GM12878 (cell line): ENCODE measurements at regions of chr11 and their contacts with region 1.

Region 1: DNA sequence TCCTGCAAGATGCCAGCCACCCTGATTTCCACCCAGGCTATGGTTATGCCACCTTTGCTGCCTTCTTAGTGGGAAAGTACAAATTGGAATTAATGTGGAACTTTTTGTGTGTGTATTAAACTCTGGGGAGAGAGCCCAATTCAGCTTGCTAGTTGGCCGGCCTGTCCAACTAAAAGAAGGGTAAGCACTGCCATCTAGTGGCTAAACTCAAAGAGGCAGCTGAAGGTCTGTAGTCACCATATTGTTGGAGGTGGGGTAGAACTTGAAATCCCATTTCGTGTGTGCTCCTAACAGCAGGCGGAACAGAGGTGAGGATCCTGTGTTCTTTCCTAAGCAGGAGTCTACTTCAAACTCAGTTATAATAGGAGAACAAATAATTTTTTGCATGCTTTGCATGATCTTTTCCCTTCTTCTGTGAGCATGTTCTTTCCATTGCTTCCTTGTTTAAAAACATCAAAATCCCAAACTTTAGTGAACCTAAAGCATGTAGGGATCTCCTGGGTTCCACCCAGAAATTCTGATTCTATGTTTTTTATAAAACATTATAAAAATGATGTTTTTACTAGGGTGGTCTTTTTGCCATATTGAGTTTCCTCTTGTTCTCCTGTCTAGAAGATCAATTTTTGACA is 138.8 kb upstream of the SORL1-AS1 start:
- DNase-seq: peak; percentile 82
- ATAC-seq: peak; percentile 71
- H3K4me3 ChIP-seq: peak overlapping the region; percentile 37; the same call in 1 of the 2 replicates
- H3K27ac ChIP-seq: peak overlapping the region; percentile 75
- H3K4me1 ChIP-seq: peaks cover 47% of the 10 kb centered on the region
- H3K27me3 ChIP-seq: no peaks in the 10 kb centered on the region
- CTCF ChIP-seq: peak; percentile 79 to 92 (median 88)
- EP300 ChIP-seq: no peak
- POLR2A ChIP-seq: no peak
- RAD21 ChIP-seq: peak; percentile 97

Region 2: DNA sequence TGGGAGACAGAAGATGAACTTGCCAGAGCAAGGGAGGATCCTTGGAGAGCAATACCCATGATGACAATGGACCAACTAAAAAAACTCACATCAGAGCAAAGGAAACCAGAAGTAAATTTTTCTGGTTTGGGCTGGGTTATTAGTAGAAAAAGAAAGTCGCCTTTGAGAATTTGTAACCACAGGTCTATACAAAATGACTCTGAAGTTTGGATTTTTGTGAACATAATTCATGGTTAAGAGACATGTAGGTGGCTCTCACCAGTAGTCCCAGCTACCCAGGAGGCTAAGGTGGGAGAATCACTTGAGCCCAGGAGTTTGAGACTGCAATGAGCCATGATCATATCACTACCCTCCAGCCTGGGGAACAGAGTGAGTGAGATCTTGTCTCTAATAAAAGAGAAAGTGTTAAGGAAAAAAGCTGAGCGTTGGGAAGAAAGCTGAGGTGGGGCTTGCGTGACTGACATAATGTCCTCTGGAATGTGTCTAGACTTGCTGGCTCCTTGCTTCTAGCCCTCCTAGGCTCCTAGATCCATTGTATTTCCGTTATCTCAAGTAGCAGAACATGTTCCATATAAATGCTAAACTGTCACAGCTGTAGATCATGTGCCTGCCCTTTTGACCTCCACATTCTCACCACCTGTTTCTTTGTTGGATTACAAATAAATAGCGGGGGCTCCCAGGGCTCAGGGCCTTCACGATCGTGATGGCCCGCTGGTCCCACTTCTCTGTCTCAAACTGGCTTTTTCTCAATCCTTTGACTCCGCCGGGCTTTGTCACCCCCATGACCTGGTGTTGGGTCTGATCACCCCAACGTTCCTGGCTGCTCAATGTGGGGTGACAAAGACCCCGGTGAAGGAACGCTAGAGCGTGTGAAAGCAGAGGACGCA is 355.2 kb before region 1 on chr11:
- CTCF ChIA-PET with region 1: interaction called, 4 read pairs
- POLR2A ChIA-PET with region 1: no interaction called
- RAD21 ChIA-PET with region 1: interaction called, 7 read pairs
- SMC1A ChIA-PET with region 1: no interaction called
- in situ Hi-C with region 1: no loop called
- intact Hi-C with region 1: loop called (anchors 2 kb)
- DNase-seq: peak; percentile 74
- ATAC-seq: peak; percentile 85
- H3K4me3 ChIP-seq: peak overlapping the region; percentile 57
- H3K27ac ChIP-seq: peak overlapping the region; percentile 95
- H3K4me1 ChIP-seq: peaks cover 32% of the 10 kb centered on the region
- H3K27me3 ChIP-seq: no peaks in the 10 kb centered on the region
- CTCF ChIP-seq: no peak
- EP300 ChIP-seq: no peak; a peak in 1 of 4 replicates
- POLR2A ChIP-seq: no peak
- RAD21 ChIP-seq: no peak

Region 3: GRCh38 chr11:121318848-121319834 is 272.4 kb before region 1 on chr11:
- CTCF ChIA-PET with region 1: interaction called, 56 read pairs
- POLR2A ChIA-PET with region 1: no interaction called
- RAD21 ChIA-PET with region 1: interaction called, 41 read pairs
- SMC1A ChIA-PET with region 1: interaction called, 36 read pairs
- in situ Hi-C with region 1: loop called (anchors 5 kb)
- intact Hi-C with region 1: loop called (anchors 1 kb)
- DNase-seq: no peak
- ATAC-seq: peak; percentile 84
- H3K4me3 ChIP-seq: no peak overlapping the region
- H3K27ac ChIP-seq: no peak overlapping the region
- H3K4me1 ChIP-seq: peaks cover 4% of the 10 kb centered on the region; the same call in 1 of the 2 replicates
- H3K27me3 ChIP-seq: no peaks in the 10 kb centered on the region
- CTCF ChIP-seq: peak; percentile 75 to 88 (median 86)
- EP300 ChIP-seq: no peak
- POLR2A ChIP-seq: no peak
- RAD21 ChIP-seq: peak; percentile 93

Region 4: DNA sequence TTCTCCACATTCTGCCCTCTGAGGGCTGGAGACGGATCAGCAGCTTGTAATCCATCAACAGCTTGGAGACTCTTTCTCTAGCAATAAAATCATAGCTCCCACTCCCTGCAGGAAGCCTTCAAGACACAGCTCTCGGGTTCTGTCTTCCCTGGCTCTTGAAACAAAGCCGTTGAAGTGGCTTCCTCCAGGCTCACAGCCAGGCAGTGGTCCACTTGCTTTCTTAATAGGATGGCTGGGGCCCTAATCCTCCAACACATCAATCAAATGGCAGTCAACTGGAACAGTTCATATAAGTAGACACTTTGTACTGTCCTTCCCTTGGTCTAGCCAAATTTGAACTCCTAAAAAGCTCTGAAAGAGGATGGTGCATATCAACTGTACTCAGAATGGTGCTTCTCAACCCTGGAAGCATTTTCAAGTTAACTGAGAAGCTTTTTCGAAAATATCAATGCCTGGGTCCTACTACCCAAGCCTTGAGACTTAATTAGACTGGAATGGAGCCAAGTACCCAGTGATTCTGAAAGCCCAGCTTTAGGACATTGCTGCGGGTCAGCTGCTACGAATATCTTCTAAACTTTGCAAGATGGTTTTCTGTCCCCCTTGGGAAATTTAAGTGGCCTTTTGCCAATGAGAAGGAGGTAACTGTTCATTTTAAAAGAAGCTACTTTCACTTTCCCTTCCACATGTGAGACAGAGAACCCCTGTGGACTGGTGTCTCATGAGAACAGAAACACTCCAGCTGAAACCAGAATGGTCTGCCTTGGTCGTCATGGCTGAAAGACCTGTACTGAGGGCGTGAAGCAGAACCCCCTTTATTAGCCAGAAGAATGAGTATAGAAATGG is 224.3 kb before region 1 on chr11:
- CTCF ChIA-PET with region 1: interaction called, 12 read pairs
- POLR2A ChIA-PET with region 1: no interaction called
- RAD21 ChIA-PET with region 1: interaction called, 14 read pairs
- SMC1A ChIA-PET with region 1: interaction called, 27 read pairs
- in situ Hi-C with region 1: no loop called
- intact Hi-C with region 1: loop called (anchors 1 kb)
- DNase-seq: peak; percentile 99
- ATAC-seq: peak; percentile 96
- H3K4me3 ChIP-seq: 0 out of 2 replicates have a peak overlapping the region, but pooled peaks have one; percentile 24
- H3K27ac ChIP-seq: peak overlapping the region; percentile 85
- H3K4me1 ChIP-seq: peaks cover 43% of the 10 kb centered on the region
- H3K27me3 ChIP-seq: no peaks in the 10 kb centered on the region
- CTCF ChIP-seq: no peak
- EP300 ChIP-seq: peak in 1 of 2 experiments; percentile 42; a peak in 1 of 4 replicates
- POLR2A ChIP-seq: no peak
- RAD21 ChIP-seq: no peak

Region 5: GRCh38 chr11:121451986-121452608 is 139.4 kb before region 1 on chr11 and contains the start of gene SORL1:
- CTCF ChIA-PET with region 1: interaction called, 50 read pairs
- POLR2A ChIA-PET with region 1: interaction called, 5 read pairs
- RAD21 ChIA-PET with region 1: interaction called, 63 read pairs
- SMC1A ChIA-PET with region 1: interaction called, 57 read pairs
- in situ Hi-C with region 1: no loop called
- intact Hi-C with region 1: loop called (anchors 1 kb)
- DNase-seq: no peak
- ATAC-seq: peak; percentile 49
- H3K4me3 ChIP-seq: peak within 1 kb of the TSS; percentile 77
- H3K27ac ChIP-seq: peak within 1 kb of the TSS; percentile 76
- H3K4me1 ChIP-seq: peaks cover 49% of the 10 kb centered on the region
- H3K27me3 ChIP-seq: no peaks in the 10 kb centered on the region
- CTCF ChIP-seq: peak; percentile 48 to 73 (median 68)
- EP300 ChIP-seq: no peak
- POLR2A ChIP-seq: peak; percentile 87
- RAD21 ChIP-seq: peak; percentile 62
- polyA plus RNA-seq, gene SORL1: 20.2 to 26.0 TPM

Region 6: GRCh38 chr11:121494355-121495099 is 97.0 kb before region 1 on chr11:
- CTCF ChIA-PET with region 1: interaction called, 15 read pairs
- POLR2A ChIA-PET with region 1: no interaction called
- RAD21 ChIA-PET with region 1: interaction called, 4 read pairs
- SMC1A ChIA-PET with region 1: interaction called, 3 read pairs
- in situ Hi-C with region 1: no loop called
- intact Hi-C with region 1: no loop called
- DNase-seq: peak; percentile 69
- ATAC-seq: peak; percentile 87
- H3K4me3 ChIP-seq: peak overlapping the region; percentile 24
- H3K27ac ChIP-seq: peak overlapping the region; percentile 66
- H3K4me1 ChIP-seq: peaks cover 32% of the 10 kb centered on the region
- H3K27me3 ChIP-seq: no peaks in the 10 kb centered on the region
- CTCF ChIP-seq: no peak
- EP300 ChIP-seq: no peak
- POLR2A ChIP-seq: no peak
- RAD21 ChIP-seq: no peak

Region 7: DNA sequence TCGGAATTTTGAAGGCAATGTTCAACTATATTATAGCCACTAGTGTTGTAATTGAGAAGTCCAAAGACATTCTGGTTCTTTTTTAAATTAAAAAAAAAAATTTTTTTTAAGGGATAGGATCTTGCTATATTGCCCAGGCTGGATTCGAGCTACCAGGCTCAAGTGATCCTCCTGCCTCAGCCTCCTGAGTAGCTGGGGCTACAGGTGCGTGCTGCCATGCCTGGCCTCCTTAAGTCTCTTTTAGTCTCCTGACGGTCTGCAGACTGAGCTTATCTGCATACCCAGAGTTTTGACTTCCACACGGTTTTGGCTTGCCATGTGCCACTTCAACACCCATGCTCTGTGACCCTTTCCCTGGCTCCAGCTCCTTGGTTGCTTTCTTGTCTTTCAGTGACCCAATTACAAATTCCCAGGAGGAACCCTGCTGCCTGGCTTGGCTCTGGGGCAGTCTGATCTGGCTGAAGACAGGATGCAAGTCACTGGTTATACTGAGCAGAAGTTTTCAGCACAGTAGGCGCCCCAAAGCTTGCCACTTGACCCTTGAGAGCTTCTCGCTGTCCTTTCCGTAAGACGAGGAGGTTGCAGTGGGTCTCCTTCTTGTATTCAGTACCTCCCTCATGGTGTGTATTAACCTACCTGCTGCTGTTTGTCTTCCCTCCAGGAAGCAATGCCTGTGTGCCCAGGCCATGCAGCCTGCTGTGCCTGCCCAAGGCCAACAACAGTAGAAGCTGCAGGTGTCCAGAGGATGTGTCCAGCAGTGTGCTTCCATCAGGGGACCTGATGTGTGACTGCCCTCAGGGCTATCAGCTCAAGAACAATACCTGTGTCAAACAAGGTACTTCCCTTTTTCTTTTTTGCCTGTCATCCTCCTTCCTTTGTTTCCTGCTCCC is 25.0 kb before region 1 on chr11:
- CTCF ChIA-PET with region 1: interaction called, 17 read pairs
- POLR2A ChIA-PET with region 1: interaction called, 3 read pairs
- RAD21 ChIA-PET with region 1: interaction called, 9 read pairs
- SMC1A ChIA-PET with region 1: interaction called, 11 read pairs
- in situ Hi-C with region 1: no loop called
- intact Hi-C with region 1: loop called (anchors 1 kb)
- DNase-seq: no peak
- ATAC-seq: no peak
- H3K4me3 ChIP-seq: no peak overlapping the region
- H3K27ac ChIP-seq: peak overlapping the region; percentile 64
- H3K4me1 ChIP-seq: peaks cover 28% of the 10 kb centered on the region
- H3K27me3 ChIP-seq: no peaks in the 10 kb centered on the region
- CTCF ChIP-seq: no peak
- EP300 ChIP-seq: no peak
- POLR2A ChIP-seq: no peak
- RAD21 ChIP-seq: no peak